ENCODE measurements at regions of chr15 and their contacts with region 1.

Region 1: GRCh38 chr15:44663409-44664308 is at the start of gene SPG11:
- DNase-seq: peak; percentile 99
- ATAC-seq: peak; percentile 83
- H3K4me3 ChIP-seq: peak within 1 kb of the TSS; percentile 81 to 99 (median 95)
- H3K4me3 Mint-ChIP-seq: peak within 1 kb of the TSS; percentile 99
- H3K27ac ChIP-seq: peak within 1 kb of the TSS; percentile 96 to 97
- H3K27ac Mint-ChIP-seq: peak within 1 kb of the TSS; percentile 93
- H3K4me1 ChIP-seq: peaks cover 51 to 58% of the 10 kb centered on the region in 2 donors
- H3K4me1 Mint-ChIP-seq: peaks cover 52% of the 10 kb centered on the region
- H3K27me3 ChIP-seq: no peaks in the 10 kb centered on the region
- H3K27me3 Mint-ChIP-seq: no peaks in the 10 kb centered on the region
- CTCF ChIP-seq: peak; percentile 86
- total RNA-seq, gene SPG11: 219 and 243 TPM in 2 replicates

Region 2: DNA sequence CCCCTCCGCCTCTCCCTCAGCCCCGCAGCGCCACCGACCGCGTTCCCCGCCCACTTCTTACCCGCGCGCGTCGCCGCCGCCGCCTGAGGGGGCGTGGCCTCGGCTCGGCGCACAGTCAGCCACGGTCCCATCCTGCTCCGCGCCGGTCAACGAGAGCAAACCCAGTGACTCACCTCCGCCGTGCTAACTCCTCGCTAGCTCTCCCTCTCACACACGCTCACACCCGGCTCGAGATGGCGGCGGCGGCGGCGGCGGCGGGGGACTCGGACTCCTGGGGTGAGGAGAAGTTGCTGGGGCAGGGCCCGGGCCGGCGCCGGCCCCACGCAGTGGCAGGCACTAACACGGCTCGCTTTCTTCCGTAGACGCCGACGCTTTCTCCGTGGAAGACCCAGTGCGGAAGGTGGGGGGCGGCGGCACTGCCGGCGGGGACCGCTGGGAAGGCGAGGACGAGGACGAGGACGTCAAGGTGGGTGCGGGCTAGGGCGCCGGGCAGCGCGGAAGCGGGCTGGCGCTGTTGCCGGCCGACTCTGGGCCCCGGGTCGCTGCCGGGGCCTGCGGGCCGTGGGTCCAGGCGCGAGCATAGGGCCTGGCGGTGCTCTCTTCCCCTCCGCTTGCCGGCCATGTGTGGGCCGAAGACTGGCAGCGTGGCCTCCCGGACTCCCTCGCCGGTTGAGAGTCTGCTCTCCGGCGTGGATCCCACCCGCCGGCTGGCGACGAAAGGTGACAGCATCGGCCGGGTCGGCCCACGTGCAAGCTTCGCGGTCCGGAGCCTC is 126.5 kb before region 1 on chr15 and contains the start of gene EIF3J:
- CTCF ChIA-PET with region 1: no interaction called
- POLR2A ChIA-PET with region 1: interaction called, 5 read pairs
- intact Hi-C with region 1: loop called (anchors 5 kb)
- DNase-seq: peak; percentile 97
- ATAC-seq: peak; percentile 89
- H3K4me3 ChIP-seq: peak within 1 kb of the TSS; percentile 82 to 99 (median 92)
- H3K4me3 Mint-ChIP-seq: peak within 1 kb of the TSS; percentile 93
- H3K27ac ChIP-seq: peak within 1 kb of the TSS; percentile 83 to 94
- H3K27ac Mint-ChIP-seq: peak within 1 kb of the TSS; percentile 98
- H3K4me1 ChIP-seq: peaks cover 15 to 21% of the 10 kb centered on the region in 2 donors
- H3K4me1 Mint-ChIP-seq: peaks cover 40% of the 10 kb centered on the region
- H3K27me3 ChIP-seq: no peaks in the 10 kb centered on the region
- H3K27me3 Mint-ChIP-seq: no peaks in the 10 kb centered on the region
- CTCF ChIP-seq: no peak
- total RNA-seq, gene EIF3J: 61.0 and 66.7 TPM in 2 replicates

Region 3: GRCh38 chr15:44616974-44617373 is 46.7 kb before region 1 on chr15:
- CTCF ChIA-PET with region 1: no interaction called
- POLR2A ChIA-PET with region 1: no interaction called
- intact Hi-C with region 1: no loop called
- DNase-seq: no peak
- ATAC-seq: no peak
- H3K4me3 ChIP-seq: no peak overlapping the region
- H3K4me3 Mint-ChIP-seq: no peak overlapping the region
- H3K27ac ChIP-seq: no peak overlapping the region
- H3K27ac Mint-ChIP-seq: no peak overlapping the region
- H3K4me1 ChIP-seq: no peaks in the 10 kb centered on the region
- H3K4me1 Mint-ChIP-seq: no peaks in the 10 kb centered on the region
- H3K27me3 ChIP-seq: no peaks in the 10 kb centered on the region
- H3K27me3 Mint-ChIP-seq: no peaks in the 10 kb centered on the region
- CTCF ChIP-seq: no peak

Region 4: GRCh38 chr15:44676676-44677075 is 13.0 kb after region 1 on chr15:
- CTCF ChIA-PET with region 1: interaction called, 50 read pairs
- POLR2A ChIA-PET with region 1: interaction called, 51 read pairs
- intact Hi-C with region 1: loop called (anchors 1 kb)
- DNase-seq: peak; percentile 34
- ATAC-seq: peak; percentile 46
- H3K4me3 ChIP-seq: peak overlapping the region in 2 of 5 experiments; percentile 13 to 26
- H3K4me3 Mint-ChIP-seq: peak overlapping the region; percentile 75
- H3K27ac ChIP-seq: peak overlapping the region; percentile 80 to 87
- H3K27ac Mint-ChIP-seq: peak overlapping the region; percentile 91
- H3K4me1 ChIP-seq: peaks cover 69 to 77% of the 10 kb centered on the region in 2 donors
- H3K4me1 Mint-ChIP-seq: peaks cover 80% of the 10 kb centered on the region
- H3K27me3 ChIP-seq: no peaks in the 10 kb centered on the region
- H3K27me3 Mint-ChIP-seq: no peaks in the 10 kb centered on the region
- CTCF ChIP-seq: no peak

Region 5: GRCh38 chr15:44698641-44699040 is 35.0 kb after region 1 on chr15:
- CTCF ChIA-PET with region 1: interaction called, 11 read pairs
- POLR2A ChIA-PET with region 1: interaction called, 3 read pairs
- intact Hi-C with region 1: no loop called
- DNase-seq: no peak
- ATAC-seq: no peak
- H3K4me3 ChIP-seq: no peak overlapping the region
- H3K4me3 Mint-ChIP-seq: no peak overlapping the region
- H3K27ac ChIP-seq: no peak overlapping the region
- H3K27ac Mint-ChIP-seq: peak overlapping the region; percentile 26
- H3K4me1 ChIP-seq: no peaks in the 10 kb centered on the region
- H3K4me1 Mint-ChIP-seq: peaks cover 10% of the 10 kb centered on the region
- H3K27me3 ChIP-seq: no peaks in the 10 kb centered on the region
- H3K27me3 Mint-ChIP-seq: no peaks in the 10 kb centered on the region
- CTCF ChIP-seq: no peak

Region 6: GRCh38 chr15:44720460-44721176 is 57.0 kb after region 1 on chr15:
- CTCF ChIA-PET with region 1: interaction called, 353 read pairs
- POLR2A ChIA-PET with region 1: interaction called, 819 read pairs
- intact Hi-C with region 1: no loop called
- DNase-seq: peak; percentile 49
- ATAC-seq: no peak
- H3K4me3 ChIP-seq: no peak overlapping the region
- H3K4me3 Mint-ChIP-seq: no peak overlapping the region
- H3K27ac ChIP-seq: peak overlapping the region; percentile 60 to 82
- H3K27ac Mint-ChIP-seq: peak overlapping the region; percentile 90
- H3K4me1 ChIP-seq: peaks cover 89 to 90% of the 10 kb centered on the region in 2 donors
- H3K4me1 Mint-ChIP-seq: peaks cover 88% of the 10 kb centered on the region
- H3K27me3 ChIP-seq: no peaks in the 10 kb centered on the region
- H3K27me3 Mint-ChIP-seq: no peaks in the 10 kb centered on the region
- CTCF ChIP-seq: no peak

Region 7: GRCh38 chr15:44738340-44738984 is 74.8 kb after region 1 on chr15:
- CTCF ChIA-PET with region 1: interaction called, 257 read pairs
- POLR2A ChIA-PET with region 1: interaction called, 819 read pairs
- intact Hi-C with region 1: loop called (anchors 1 kb)
- DNase-seq: peak; percentile 76
- ATAC-seq: peak; percentile 32
- H3K4me3 ChIP-seq: no peak overlapping the region
- H3K4me3 Mint-ChIP-seq: no peak overlapping the region
- H3K27ac ChIP-seq: no peak overlapping the region
- H3K27ac Mint-ChIP-seq: peak overlapping the region; percentile 20
- H3K4me1 ChIP-seq: peaks cover 23 to 27% of the 10 kb centered on the region in 2 donors
- H3K4me1 Mint-ChIP-seq: peaks cover 34% of the 10 kb centered on the region
- H3K27me3 ChIP-seq: no peaks in the 10 kb centered on the region
- H3K27me3 Mint-ChIP-seq: no peaks in the 10 kb centered on the region
- CTCF ChIP-seq: peak; percentile 90

Region 8: GRCh38 chr15:45187894-45188830 is 524.5 kb after region 1 on chr15 and contains the start of gene SHF:
- CTCF ChIA-PET with region 1: no interaction called
- POLR2A ChIA-PET with region 1: no interaction called
- intact Hi-C with region 1: no loop called
- DNase-seq: peak; percentile 87
- ATAC-seq: peak; percentile 79
- H3K4me3 ChIP-seq: peak within 1 kb of the TSS; percentile 32 to 98 (median 77)
- H3K4me3 Mint-ChIP-seq: peak within 1 kb of the TSS; percentile 91
- H3K27ac ChIP-seq: peak within 1 kb of the TSS; percentile 73 to 77
- H3K27ac Mint-ChIP-seq: peak within 1 kb of the TSS; percentile 78
- H3K4me1 ChIP-seq: peaks cover 0 to 15% of the 10 kb centered on the region in 2 donors
- H3K4me1 Mint-ChIP-seq: peaks cover 20% of the 10 kb centered on the region
- H3K27me3 ChIP-seq: no peaks in the 10 kb centered on the region
- H3K27me3 Mint-ChIP-seq: peaks cover 7% of the 10 kb centered on the region
- CTCF ChIP-seq: no peak
- total RNA-seq, gene SHF: 15.4 and 16.9 TPM in 2 replicates

Measured in B cell (primary cell).